Activated CD4-positive, alpha-beta T cell treated with anti-CD3 and anti-CD28 coated beads for 36 hours (primary cell): ENCODE measurements at regions of chr1 and their contacts with region 1.

Region 1: GRCh38 chr1:87084244-87084836 is 169.9 kb downstream of the HS2ST1 start:
- DNase-seq: no peak
- ATAC-seq: peak; percentile 30
- H3K4me3 Mint-ChIP-seq: no peak overlapping the region
- H3K27ac Mint-ChIP-seq: no peak overlapping the region
- H3K4me1 Mint-ChIP-seq: peaks cover 13% of the 10 kb centered on the region
- H3K27me3 Mint-ChIP-seq: no peaks in the 10 kb centered on the region

Region 2: DNA sequence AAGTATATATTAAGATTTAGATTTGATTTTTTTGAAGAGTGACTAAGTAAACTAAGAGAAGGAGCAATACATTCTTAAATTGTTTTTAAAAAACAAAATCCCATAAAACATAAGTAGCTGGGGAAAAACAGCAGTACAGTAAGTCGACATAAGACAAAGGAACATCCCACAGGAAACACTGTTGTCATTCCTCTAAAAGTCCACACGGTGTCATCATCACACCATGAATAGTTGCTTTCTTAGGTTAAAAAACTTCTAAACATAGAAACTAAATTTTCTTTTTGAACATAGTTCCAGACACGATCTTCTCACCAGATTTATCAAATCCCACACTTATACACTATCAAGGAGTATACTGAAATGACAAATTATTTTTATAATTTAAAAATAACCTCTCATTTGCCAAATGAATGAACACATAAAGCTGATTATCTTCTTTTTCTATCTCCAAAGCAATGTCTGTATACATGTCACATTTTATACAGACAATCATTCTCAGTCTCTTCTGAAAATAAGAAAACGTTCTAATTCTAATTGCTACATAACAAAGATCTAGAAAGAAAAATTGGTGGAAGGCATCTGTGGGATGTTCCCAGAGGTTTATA is 704.0 kb before region 1 on chr1:
- CTCF ChIA-PET with region 1: interaction called, 3 read pairs
- POLR2A ChIA-PET with region 1: no interaction called
- intact Hi-C with region 1: loop called in 1 of 2 experiments (anchors 1 kb)
- DNase-seq: no peak
- ATAC-seq: peak; percentile 51
- H3K4me3 Mint-ChIP-seq: no peak overlapping the region
- H3K27ac Mint-ChIP-seq: no peak overlapping the region
- H3K4me1 Mint-ChIP-seq: peaks cover 8% of the 10 kb centered on the region
- H3K27me3 Mint-ChIP-seq: no peaks in the 10 kb centered on the region

Region 3: DNA sequence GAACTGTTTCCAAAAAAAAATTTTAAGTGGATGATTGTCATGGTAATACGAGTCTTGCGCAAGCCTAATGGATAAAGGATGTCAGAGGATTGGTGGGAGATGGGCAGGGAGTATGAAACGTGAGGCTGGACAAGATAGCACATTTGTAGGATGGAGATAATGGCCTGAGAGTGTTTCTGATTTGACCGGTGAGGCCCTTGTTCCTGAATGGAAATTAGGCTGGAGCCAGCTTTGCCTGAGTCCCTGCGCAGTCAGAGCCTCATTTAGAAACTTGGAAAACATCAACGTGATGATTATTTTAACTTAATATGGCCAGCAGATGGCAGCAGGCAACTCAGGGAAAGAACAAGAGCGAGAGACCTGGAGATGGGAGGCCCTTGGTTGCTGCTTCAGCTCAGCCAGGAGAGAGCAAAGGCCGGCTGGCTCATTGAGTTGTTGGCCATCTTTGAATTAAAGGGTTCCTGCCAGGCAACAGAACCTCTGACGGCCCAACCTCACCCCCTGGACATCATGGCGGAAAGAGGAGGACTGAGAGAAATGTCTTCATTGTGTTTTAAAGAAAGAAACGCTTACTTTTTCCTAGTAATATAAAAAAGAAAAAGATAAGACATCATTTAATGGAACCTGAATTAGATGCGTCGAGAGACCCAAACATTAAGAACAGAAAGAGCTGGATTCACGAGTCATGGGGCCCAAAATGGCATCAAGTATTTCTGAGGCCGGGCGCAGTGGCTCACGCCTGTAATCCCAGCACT is 250.7 kb before region 1 on chr1:
- CTCF ChIA-PET with region 1: interaction called, 90 read pairs
- POLR2A ChIA-PET with region 1: no interaction called
- intact Hi-C with region 1: loop called (anchors 1 kb)
- DNase-seq: peak; percentile 74
- ATAC-seq: peak; percentile 77
- H3K4me3 Mint-ChIP-seq: no peak overlapping the region
- H3K27ac Mint-ChIP-seq: no peak overlapping the region
- H3K4me1 Mint-ChIP-seq: peaks cover 3% of the 10 kb centered on the region
- H3K27me3 Mint-ChIP-seq: no peaks in the 10 kb centered on the region

Region 4: DNA sequence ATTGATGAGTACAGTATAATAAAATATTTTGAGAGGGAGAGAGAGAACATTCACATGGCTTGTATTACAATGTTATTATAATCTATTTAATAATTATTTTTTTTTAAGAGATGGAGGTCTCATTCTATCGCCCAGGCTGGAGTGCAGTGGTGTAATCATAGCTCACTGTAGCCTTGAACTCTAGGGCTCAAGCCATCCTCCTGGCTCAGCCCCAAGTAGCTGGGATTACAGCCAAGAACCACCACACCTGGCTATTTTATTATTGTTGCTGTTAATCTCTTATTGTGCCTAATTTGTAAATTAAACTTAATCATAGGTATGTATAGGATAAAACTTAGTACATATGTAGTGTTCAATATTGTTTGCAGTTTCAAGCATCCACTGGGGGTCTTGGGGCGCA is 112.1 kb before region 1 on chr1:
- CTCF ChIA-PET with region 1: interaction called, 4 read pairs
- POLR2A ChIA-PET with region 1: no interaction called
- intact Hi-C with region 1: loop called (anchors 2 to 10 kb)
- DNase-seq: no peak
- ATAC-seq: no peak
- H3K4me3 Mint-ChIP-seq: no peak overlapping the region
- H3K27ac Mint-ChIP-seq: no peak overlapping the region
- H3K4me1 Mint-ChIP-seq: peaks cover 4% of the 10 kb centered on the region
- H3K27me3 Mint-ChIP-seq: no peaks in the 10 kb centered on the region

Region 5: DNA sequence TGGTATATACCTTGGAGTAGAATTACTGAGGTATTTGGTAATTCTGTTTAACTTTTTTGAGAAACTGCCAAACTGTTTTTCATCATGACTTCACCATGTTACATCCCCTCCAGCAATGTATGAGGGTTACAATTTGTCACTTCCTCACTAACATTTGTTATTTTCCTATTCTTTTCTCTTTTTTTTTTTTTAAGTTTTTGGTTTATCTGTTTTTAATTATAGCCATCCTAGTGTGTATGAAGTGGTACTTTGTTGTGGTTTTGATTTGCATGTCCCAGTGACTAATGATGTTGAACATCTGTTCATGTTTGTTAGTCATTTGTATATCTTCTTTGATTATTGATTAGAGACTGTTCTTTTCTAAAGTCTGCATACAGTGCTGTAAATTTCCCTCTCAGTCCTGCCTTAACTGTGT is 22.6 kb before region 1 on chr1:
- CTCF ChIA-PET with region 1: interaction called, 10 read pairs
- POLR2A ChIA-PET with region 1: no interaction called
- intact Hi-C with region 1: no loop called
- DNase-seq: no peak
- ATAC-seq: peak; percentile 85
- H3K4me3 Mint-ChIP-seq: no peak overlapping the region
- H3K27ac Mint-ChIP-seq: no peak overlapping the region
- H3K4me1 Mint-ChIP-seq: peaks cover 47% of the 10 kb centered on the region
- H3K27me3 Mint-ChIP-seq: no peaks in the 10 kb centered on the region